Common myeloid progenitor, CD34-positive (primary cell): ENCODE measurements at regions of chr2 and their contacts with region 1.

Region 1: GRCh38 chr2:207746131-207746530 is 23.6 kb downstream of the FZD5 start:
- DNase-seq: peak; percentile 74 to 87 (median 82)
- H3K4me3 ChIP-seq: no peak overlapping the region
- H3K27ac ChIP-seq: no peak overlapping the region
- H3K4me1 ChIP-seq: no peaks in the 10 kb centered on the region
- H3K27me3 ChIP-seq: no peaks in the 10 kb centered on the region

Region 2: GRCh38 chr2:207516206-207516605 is 229.9 kb before region 1 on chr2:
- CTCF ChIA-PET with region 1: no interaction called
- POLR2A ChIA-PET with region 1: no interaction called
- DNase-seq: no peak
- H3K4me3 ChIP-seq: no peak overlapping the region
- H3K27ac ChIP-seq: no peak overlapping the region
- H3K4me1 ChIP-seq: peaks cover 0 to 10% (median 4%) of the 10 kb centered on the region in 4 experiments
- H3K27me3 ChIP-seq: no peaks in the 10 kb centered on the region

Region 3: GRCh38 chr2:207734264-207734635 is 11.9 kb before region 1 on chr2:
- CTCF ChIA-PET with region 1: interaction called, 12 read pairs
- POLR2A ChIA-PET with region 1: no interaction called
- DNase-seq: peak; percentile 53 to 75 (median 71)
- H3K4me3 ChIP-seq: no peak overlapping the region
- H3K27ac ChIP-seq: no peak overlapping the region
- H3K4me1 ChIP-seq: no peaks in the 10 kb centered on the region
- H3K27me3 ChIP-seq: no peaks in the 10 kb centered on the region

Region 4: DNA sequence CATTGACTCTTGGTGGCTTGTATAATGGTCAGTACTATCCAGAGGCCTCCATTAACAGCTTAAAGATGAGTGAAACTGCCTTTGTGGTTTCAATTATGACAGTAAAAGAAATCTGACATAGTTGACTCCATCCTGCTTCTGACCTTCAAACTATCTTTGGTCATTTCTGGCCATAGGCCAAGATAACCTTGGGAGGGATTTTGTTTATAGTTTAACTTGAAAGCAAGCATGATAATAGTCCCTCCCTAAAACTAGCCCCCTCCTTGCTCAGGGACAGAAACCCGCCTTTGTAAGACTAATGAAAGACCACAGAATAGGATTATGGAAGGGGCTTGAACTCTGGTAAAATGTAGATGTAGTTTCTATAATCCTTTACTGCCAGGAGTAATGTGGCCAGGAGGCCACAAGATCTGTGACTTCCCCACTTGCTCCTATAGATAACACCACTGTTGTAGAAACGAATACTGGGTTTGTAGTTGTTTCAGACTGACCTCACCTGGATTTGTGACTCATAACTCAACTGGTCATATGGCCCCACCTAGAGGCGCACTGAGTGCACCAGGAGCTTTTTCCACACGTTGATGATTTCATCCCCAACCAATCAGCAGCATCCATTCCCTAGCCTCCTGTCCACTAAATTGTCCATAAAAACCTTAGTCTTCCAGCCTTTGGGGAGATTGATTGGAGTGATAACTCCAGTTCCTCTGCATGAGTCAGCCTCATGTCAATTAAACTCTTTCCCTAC is 287.8 kb after region 1 on chr2:
- CTCF ChIA-PET with region 1: interaction called, 88 read pairs
- POLR2A ChIA-PET with region 1: no interaction called
- DNase-seq: peak; percentile 44 to 68 (median 58)
- H3K4me3 ChIP-seq: no peak overlapping the region
- H3K27ac ChIP-seq: no peak overlapping the region
- H3K4me1 ChIP-seq: peaks cover 0 to 8% (median 1%) of the 10 kb centered on the region in 4 experiments
- H3K27me3 ChIP-seq: no peaks in the 10 kb centered on the region

Region 5: GRCh38 chr2:208046686-208047085 is 300.6 kb after region 1 on chr2:
- CTCF ChIA-PET with region 1: interaction called, 88 read pairs
- POLR2A ChIA-PET with region 1: interaction called, 3 read pairs
- DNase-seq: no peak
- H3K4me3 ChIP-seq: no peak overlapping the region
- H3K27ac ChIP-seq: no peak overlapping the region
- H3K4me1 ChIP-seq: peaks cover 5 to 17% (median 12%) of the 10 kb centered on the region in 4 experiments
- H3K27me3 ChIP-seq: no peaks in the 10 kb centered on the region